ENCODE measurements at regions of chr1 and their contacts with region 1.

Region 1: GRCh38 chr1:109483672-109484518 is at the start of gene ATXN7L2:
- DNase-seq: peak; percentile 95
- H3K4me3 Mint-ChIP-seq: peak within 1 kb of the TSS; percentile 90
- H3K27ac Mint-ChIP-seq: peak within 1 kb of the TSS; percentile 88
- H3K4me1 Mint-ChIP-seq: peaks cover 28% of the 10 kb centered on the region
- H3K27me3 Mint-ChIP-seq: no peaks in the 10 kb centered on the region
- total RNA-seq, gene ATXN7L2: 10.7 to 11.1 TPM

Region 2: DNA sequence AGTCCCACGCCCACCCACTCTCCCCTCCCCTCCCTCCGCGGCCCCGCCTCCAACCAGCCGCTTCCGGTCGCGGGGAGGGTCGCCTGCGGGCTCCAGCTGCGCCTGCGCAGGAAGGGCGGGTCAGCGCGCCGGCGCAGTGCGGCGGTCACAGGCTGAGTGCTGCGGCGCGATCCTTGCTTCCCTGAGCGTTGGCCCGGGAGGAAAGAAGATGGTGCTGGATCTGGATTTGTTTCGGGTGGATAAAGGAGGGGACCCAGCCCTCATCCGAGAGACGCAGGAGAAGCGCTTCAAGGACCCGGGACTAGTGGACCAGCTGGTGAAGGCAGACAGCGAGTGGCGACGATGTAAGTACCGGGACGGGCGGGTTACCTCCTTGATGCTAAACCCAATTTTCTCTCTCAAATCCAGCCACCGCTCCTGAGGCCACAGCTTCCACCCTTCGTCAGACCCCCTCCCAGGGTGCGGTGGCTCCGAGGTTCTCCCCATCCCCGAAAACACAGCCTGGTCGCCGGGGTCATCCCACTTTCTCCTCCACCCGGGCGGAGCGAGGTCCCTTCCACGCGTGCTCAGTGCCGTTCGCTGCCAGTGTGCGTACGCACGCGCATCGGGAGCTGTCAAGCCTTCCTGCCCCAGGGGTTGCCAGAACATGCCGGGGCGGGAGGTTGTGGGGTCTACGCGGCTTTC is 270.0 kb before region 1 on chr1 and contains the start of gene SARS1:
- CTCF ChIA-PET with region 1: no interaction called
- POLR2A ChIA-PET with region 1: no interaction called
- intact Hi-C with region 1: loop called (anchors 2 kb)
- DNase-seq: peak; percentile 92
- H3K4me3 Mint-ChIP-seq: peak within 1 kb of the TSS; percentile 98
- H3K27ac Mint-ChIP-seq: peak within 1 kb of the TSS; percentile 97
- H3K4me1 Mint-ChIP-seq: peaks cover 31% of the 10 kb centered on the region
- H3K27me3 Mint-ChIP-seq: no peaks in the 10 kb centered on the region
- total RNA-seq, gene SARS1: 245 to 251 TPM

Region 3: GRCh38 chr1:109282952-109283747 is 200.7 kb before region 1 on chr1 and contains the start of gene PSRC1:
- CTCF ChIA-PET with region 1: no interaction called
- POLR2A ChIA-PET with region 1: no interaction called
- intact Hi-C with region 1: loop called (anchors 5 kb)
- DNase-seq: peak; percentile 94
- H3K4me3 Mint-ChIP-seq: peak within 1 kb of the TSS; percentile 95
- H3K27ac Mint-ChIP-seq: peak within 1 kb of the TSS; percentile 89
- H3K4me1 Mint-ChIP-seq: peaks cover 12% of the 10 kb centered on the region
- H3K27me3 Mint-ChIP-seq: no peaks in the 10 kb centered on the region
- total RNA-seq, gene PSRC1: 14.9 to 16.3 TPM

Region 4: DNA sequence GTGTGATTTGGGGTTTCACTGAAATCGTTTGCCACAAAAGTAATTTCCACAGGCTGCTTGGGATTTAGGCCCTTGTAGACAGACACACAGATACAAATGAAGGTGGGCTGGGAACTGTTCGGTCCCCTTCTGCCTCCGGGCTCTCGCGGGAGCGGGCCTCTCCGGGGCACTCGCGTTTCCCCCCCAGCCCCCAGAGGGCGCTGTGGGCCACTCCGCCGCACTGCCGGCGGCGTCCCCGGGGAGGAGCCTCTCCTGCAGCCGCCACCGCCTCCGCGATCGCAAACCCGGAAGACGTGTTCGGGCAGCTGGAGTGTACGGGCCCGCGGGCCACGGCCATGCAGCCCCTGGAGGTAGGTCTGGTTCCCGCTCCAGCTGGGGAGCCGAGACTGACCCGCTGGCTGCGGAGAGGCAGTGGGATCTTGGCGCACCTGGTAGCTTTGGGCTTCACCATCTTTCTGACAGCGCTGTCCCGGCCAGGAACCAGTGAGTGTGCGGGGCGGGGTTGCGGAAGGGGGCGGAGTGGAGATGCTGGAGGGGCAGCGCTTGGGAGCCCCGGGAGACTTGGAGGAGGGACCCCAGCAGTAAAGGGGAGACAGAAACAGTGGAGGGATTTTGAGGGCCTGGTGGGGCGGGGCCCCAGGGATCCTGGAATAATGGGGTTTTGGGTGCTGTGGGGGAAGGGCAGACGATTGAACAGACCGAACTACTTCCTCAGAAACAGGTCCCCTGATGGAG is 10.1 kb after region 1 on chr1 and contains the start of gene CYB561D1:
- CTCF ChIA-PET with region 1: interaction called, 437 read pairs
- POLR2A ChIA-PET with region 1: interaction called, 18 read pairs
- intact Hi-C with region 1: loop called (anchors 1 kb)
- DNase-seq: peak; percentile 93
- H3K4me3 Mint-ChIP-seq: peak within 1 kb of the TSS; percentile 89
- H3K27ac Mint-ChIP-seq: peak within 1 kb of the TSS; percentile 78
- H3K4me1 Mint-ChIP-seq: peaks cover 44% of the 10 kb centered on the region
- H3K27me3 Mint-ChIP-seq: no peaks in the 10 kb centered on the region
- total RNA-seq, gene CYB561D1: 6.6 to 8.7 TPM

Region 5: DNA sequence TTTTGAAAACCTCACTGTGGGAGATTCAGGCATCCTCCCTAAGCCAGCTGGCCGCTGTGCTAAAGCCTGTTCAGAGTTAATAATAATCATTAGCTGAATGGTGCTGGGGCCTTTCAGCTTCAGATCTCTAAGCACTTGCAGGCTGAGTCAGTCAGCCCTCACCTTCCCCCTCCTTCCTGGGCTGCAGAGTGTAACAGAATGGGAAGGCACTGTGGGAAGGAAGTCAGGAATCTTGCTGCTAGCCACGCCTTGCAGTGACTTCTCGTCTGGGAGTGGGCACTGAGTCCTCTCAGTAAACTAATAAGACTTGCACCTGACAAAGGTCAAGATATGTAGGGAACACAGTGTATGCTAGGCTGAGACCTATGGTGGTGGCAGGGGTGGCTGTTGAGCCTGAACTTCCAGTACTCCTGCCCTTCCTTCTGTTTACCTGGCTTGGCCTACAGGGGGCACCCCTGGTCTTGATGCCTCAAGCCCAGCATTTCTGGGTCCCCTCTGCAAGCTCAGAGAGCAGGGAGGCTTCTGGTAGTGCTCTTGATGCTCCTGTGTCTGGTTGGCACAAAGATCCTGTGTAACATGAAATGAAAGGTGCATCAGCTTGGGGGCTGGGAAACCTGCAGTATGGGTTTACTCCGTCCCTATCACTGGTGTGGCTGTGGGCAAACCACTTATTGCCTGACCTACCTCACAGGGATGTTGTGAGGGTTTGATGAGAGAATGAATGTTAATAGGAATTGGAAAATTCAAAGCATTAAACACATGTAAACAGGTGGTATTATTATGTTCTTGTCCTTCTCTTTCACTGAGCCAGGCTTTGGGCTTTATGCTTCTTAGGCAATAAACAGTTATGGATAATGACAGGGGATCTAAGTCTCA is 16.0 kb after region 1 on chr1:
- CTCF ChIA-PET with region 1: interaction called, 437 read pairs
- POLR2A ChIA-PET with region 1: interaction called, 18 read pairs
- intact Hi-C with region 1: no loop called
- DNase-seq: peak; percentile 70
- H3K4me3 Mint-ChIP-seq: no peak overlapping the region
- H3K27ac Mint-ChIP-seq: peak overlapping the region; percentile 38
- H3K4me1 Mint-ChIP-seq: peaks cover 88% of the 10 kb centered on the region
- H3K27me3 Mint-ChIP-seq: no peaks in the 10 kb centered on the region

Region 6: DNA sequence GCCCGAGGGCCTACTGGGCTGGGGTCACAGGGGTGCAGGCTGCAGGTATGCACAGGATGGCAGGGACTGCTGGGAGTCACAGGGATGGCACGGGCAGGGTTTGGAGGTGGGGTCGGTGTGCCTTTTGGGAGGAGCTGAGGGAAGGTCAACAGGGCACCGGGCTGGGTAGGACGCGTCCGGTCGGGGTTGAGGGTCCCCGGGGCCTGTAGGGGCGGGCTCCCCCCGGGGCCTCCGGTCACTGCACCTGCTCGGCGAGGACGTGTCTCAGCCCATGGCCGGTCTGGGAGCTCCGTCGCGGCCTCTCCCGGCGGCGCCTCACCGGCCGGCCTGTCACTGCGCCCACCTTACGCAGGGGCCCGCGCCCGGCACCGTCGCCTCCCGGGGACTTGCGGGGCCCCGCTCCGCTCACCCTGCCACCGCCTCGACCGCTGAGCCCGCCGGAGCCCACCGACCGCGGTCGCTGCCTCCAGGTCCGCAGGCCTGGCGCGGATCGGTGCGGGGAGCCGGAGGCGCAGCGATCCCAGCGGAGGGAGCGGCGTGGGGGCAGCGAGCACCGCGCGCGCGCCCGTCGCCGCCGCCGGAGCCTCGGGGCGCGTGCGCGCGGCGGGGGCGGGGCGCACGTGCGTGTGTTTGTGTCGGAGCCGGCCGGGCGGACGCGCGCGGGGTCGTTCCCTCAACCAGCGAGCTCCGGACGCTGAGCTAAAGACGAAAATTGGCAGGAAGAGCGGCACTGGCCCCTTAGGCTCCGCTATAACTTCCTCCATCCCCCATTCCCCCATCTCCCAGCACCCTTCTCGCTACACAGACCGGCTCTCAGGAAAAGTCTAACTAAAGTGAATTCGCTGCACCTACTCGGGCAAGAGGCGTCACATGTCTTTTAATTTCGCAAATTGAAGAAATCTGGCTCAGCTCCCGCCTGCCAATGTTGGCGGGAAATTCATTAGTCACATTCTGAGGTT is 25.6 kb after region 1 on chr1 and contains the start of gene AMIGO1:
- CTCF ChIA-PET with region 1: interaction called, 437 read pairs
- POLR2A ChIA-PET with region 1: interaction called, 5 read pairs
- intact Hi-C with region 1: loop called (anchors 2 kb)
- DNase-seq: peak; percentile 67
- H3K4me3 Mint-ChIP-seq: peak within 1 kb of the TSS; percentile 82
- H3K27ac Mint-ChIP-seq: peak within 1 kb of the TSS; percentile 67
- H3K4me1 Mint-ChIP-seq: peaks cover 55% of the 10 kb centered on the region
- H3K27me3 Mint-ChIP-seq: no peaks in the 10 kb centered on the region
- total RNA-seq, gene AMIGO1: 1.8 to 2.2 TPM

Measured in activated CD4-positive, alpha-beta memory T cell treated with anti-CD3 and anti-CD28 coated beads for 36 hours (primary cell).